ENCODE measurements at regions of chr16 and their contacts with region 1.

Region 1: GRCh38 chr16:4307215-4308037 is 8.4 kb upstream of the GLIS2 start:
- DNase-seq: peak; percentile 94 to 96 (median 95)
- H3K4me3 ChIP-seq: peak overlapping the region; percentile 60 to 81 (median 69)
- H3K4me3 Mint-ChIP-seq: peak overlapping the region; percentile 90 to 95
- H3K27ac ChIP-seq: peak overlapping the region; percentile 85 to 93
- H3K27ac Mint-ChIP-seq: peak overlapping the region; percentile 94 to 99 (median 97)
- H3K4me1 ChIP-seq: peaks cover 15 to 22% of the 10 kb centered on the region in 2 donors
- H3K4me1 Mint-ChIP-seq: peaks cover 28% of the 10 kb centered on the region
- H3K27me3 ChIP-seq: peaks cover 0 to 4% of the 10 kb centered on the region in 2 donors
- H3K27me3 Mint-ChIP-seq: peaks cover 5 to 18% (median 8%) of the 10 kb centered on the region in 3 donors
- CTCF ChIP-seq: no peak

Region 2: GRCh38 chr16:4271176-4272066 is 36.0 kb before region 1 on chr16:
- intact Hi-C with region 1: loop called (anchors 5 kb)
- DNase-seq: peak; percentile 77 to 80 (median 77)
- H3K4me3 ChIP-seq: peak overlapping the region; percentile 64 to 100 (median 97)
- H3K4me3 Mint-ChIP-seq: peak overlapping the region; percentile 88 to 91
- H3K27ac ChIP-seq: peak overlapping the region; percentile 56 to 79
- H3K27ac Mint-ChIP-seq: peak overlapping the region; percentile 69 to 94 (median 88)
- H3K4me1 ChIP-seq: peaks cover 19 to 38% of the 10 kb centered on the region in 2 donors
- H3K4me1 Mint-ChIP-seq: peaks cover 19% of the 10 kb centered on the region
- H3K27me3 ChIP-seq: no peaks in the 10 kb centered on the region
- H3K27me3 Mint-ChIP-seq: no peaks in the 10 kb centered on the region
- CTCF ChIP-seq: no peak